HEK293 (cell line): ENCODE measurements at regions of chr16 and their contacts with region 1.

Region 1: GRCh38 chr16:1677802-1678496 is at the start of gene JPT2:
- H3K4me3 ChIP-seq: peak within 1 kb of the TSS; percentile 71
- H3K27ac ChIP-seq: peak within 1 kb of the TSS; percentile 95
- H3K4me1 ChIP-seq: no peaks in the 10 kb centered on the region; the same call in 1 of the 2 replicates
- CTCF ChIP-seq: no peak

Region 2: DNA sequence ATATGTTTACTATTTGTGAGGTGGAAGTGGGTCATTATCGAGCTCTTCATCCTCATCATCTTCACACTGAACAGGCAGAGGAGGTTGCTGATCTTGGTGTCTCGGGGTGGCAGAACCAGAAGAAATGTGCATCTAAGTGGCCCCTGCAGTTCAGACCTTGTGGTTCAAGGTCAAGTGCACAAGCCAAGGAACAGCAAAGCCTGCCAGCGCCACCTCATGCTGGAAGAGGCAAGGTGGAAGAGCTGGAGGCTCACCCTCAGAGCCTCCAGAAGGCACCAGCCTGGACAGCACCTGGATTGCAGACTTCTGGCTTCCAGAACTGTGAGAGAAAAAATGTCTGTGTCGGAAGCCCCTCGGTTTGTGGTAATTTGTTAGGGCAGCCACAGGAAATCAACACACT is 98.7 kb before region 1 on chr16:
- CTCF ChIA-PET with region 1: no interaction called
- POLR2A ChIA-PET with region 1: no interaction called
- H3K4me3 ChIP-seq: no peak overlapping the region
- H3K27ac ChIP-seq: no peak overlapping the region
- H3K4me1 ChIP-seq: no peaks in the 10 kb centered on the region
- CTCF ChIP-seq: no peak

Region 3: DNA sequence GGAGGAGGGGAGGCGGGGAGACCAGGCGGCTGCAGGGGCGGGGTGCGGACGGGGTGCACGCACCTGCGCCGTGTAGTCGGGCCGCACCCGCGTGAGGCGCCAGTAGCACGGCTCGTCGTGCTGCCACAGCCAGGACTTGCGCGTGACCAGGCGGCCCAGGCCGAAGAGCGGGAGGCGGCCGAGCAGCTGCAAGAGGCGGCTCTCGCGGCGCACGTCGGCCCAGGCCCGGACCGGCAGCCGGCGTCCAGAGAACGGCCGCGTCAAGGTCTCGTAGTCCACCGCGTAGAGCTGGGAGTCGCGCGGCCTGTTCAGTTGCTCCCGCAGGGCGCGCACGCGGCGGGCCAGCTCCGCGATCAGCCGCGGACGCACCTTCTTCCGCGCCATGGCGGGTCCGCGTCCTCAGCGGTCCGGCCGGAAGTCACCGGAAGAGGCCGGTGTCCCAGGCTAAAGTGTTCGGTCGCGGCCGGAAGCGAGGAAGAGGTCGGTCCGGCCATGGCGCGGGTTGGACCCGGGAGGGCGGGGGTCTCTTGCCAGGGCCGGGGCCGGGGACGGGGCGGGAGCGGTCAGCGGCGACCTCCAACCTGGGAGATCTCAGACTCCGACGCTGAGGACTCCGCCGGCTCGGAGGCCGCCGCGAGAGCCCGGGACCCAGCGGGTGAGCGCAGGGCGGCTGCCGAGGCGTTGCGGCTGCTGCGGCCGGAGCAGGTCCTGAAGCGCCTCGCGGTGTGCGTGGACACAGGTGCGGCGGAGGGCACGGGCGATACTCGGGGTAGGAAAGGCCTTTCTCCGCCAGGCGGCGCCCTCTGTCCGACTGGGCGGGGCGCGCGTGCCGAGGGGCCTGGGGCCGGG is 95.0 kb after region 1 on chr16 and contains the starts of genes EME2 and MRPS34:
- CTCF ChIA-PET with region 1: no interaction called
- POLR2A ChIA-PET with region 1: interaction called, 10 read pairs
- H3K4me3 ChIP-seq: peak within 1 kb of the TSS; percentile 95
- H3K27ac ChIP-seq: peak within 1 kb of the TSS; percentile 94
- H3K4me1 ChIP-seq: peaks cover 9% of the 10 kb centered on the region
- CTCF ChIP-seq: peak; percentile 98